Activated B cell treated with CpG ODN at 0.5 μM for 24 hours (primary cell): ENCODE measurements at regions of chr20 and their contacts with region 1.

Region 1: DNA sequence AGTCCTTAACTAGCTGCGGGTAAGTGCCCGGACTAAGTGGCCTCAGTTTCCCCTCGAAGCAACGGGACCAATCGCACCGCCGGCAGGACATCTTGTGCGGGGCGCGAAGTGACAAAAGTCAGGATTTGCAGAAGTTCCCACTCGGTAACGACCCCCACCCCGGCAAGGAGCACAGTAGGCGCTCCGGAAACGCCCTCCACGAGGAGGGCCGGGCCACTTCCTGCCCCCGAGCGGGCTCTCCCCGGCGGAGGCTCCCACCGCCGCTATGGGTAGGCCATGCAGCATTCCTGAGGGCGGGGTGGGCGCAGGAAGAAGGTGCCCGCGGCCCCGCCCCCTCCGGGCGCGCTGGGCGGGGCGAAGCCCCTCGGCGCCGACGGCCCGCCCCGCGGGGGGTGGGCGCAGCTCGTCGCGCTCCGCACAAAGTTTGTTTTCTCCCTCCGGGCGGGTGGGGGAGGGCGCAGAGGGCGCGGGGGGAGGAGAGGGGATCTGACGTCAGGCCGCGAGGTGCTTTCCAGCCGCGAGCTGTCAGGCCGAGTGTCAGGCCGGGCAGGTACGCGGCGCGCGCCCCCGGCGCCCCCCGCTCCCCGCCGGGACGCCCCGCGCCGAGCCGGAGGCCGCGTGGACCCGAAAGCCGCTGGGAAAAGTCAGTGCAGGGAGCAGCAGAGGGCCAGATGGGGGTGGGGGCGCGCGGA is at the start of gene TGIF2:
- DNase-seq: peak; percentile 92
- ATAC-seq: peak; percentile 77
- H3K4me3 Mint-ChIP-seq: peak within 1 kb of the TSS; percentile 90
- H3K27ac Mint-ChIP-seq: peak within 1 kb of the TSS; percentile 91
- H3K4me1 Mint-ChIP-seq: peaks cover 36% of the 10 kb centered on the region
- H3K27me3 Mint-ChIP-seq: no peaks in the 10 kb centered on the region
- CTCF ChIP-seq: no peak
- total RNA-seq, gene TGIF2: 40.8 and 43.8 TPM in 2 replicates

Region 2: GRCh38 chr20:36314734-36315541 is 258.3 kb before region 1 on chr20:
- CTCF ChIA-PET with region 1: no interaction called
- POLR2A ChIA-PET with region 1: no interaction called
- intact Hi-C with region 1: no loop called
- DNase-seq: no peak
- ATAC-seq: no peak
- H3K4me3 Mint-ChIP-seq: no peak overlapping the region
- H3K27ac Mint-ChIP-seq: no peak overlapping the region
- H3K4me1 Mint-ChIP-seq: no peaks in the 10 kb centered on the region
- H3K27me3 Mint-ChIP-seq: peaks cover 22% of the 10 kb centered on the region
- CTCF ChIP-seq: no peak

Region 3: GRCh38 chr20:36355469-36356171 is 217.6 kb before region 1 on chr20:
- CTCF ChIA-PET with region 1: no interaction called
- POLR2A ChIA-PET with region 1: no interaction called
- intact Hi-C with region 1: no loop called
- DNase-seq: no peak
- ATAC-seq: no peak
- H3K4me3 Mint-ChIP-seq: no peak overlapping the region
- H3K27ac Mint-ChIP-seq: no peak overlapping the region
- H3K4me1 Mint-ChIP-seq: no peaks in the 10 kb centered on the region
- H3K27me3 Mint-ChIP-seq: peaks cover 18% of the 10 kb centered on the region
- CTCF ChIP-seq: no peak

Region 4: GRCh38 chr20:36591854-36592641 is 18.8 kb after region 1 on chr20:
- CTCF ChIA-PET with region 1: interaction called, 11 read pairs
- POLR2A ChIA-PET with region 1: interaction called, 205 read pairs
- intact Hi-C with region 1: loop called (anchors 1 kb)
- DNase-seq: no peak
- ATAC-seq: no peak
- H3K4me3 Mint-ChIP-seq: no peak overlapping the region
- H3K27ac Mint-ChIP-seq: peak overlapping the region; percentile 53
- H3K4me1 Mint-ChIP-seq: peaks cover 70% of the 10 kb centered on the region
- H3K27me3 Mint-ChIP-seq: no peaks in the 10 kb centered on the region
- CTCF ChIP-seq: no peak

Region 5: DNA sequence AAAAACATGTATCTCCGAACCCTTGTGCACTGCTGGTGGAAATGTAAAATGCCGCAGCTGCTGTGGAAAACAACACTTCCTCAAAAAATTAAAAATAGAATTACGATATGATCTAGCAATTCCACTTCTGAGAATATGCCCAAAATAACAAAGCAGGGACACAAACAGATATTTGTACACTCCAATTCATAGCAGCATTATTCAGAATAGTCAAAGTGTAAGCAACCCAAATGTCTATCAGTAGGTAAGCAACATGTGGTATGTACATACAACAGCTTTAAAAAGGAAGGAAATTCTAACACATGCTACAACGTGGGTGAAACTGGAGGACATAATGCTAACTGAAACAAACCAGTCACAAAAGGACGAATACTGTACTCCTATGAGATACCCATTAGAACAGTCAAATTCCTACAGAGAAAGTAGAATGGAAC is 26.7 kb after region 1 on chr20:
- CTCF ChIA-PET with region 1: interaction called, 39 read pairs
- POLR2A ChIA-PET with region 1: interaction called, 268 read pairs
- intact Hi-C with region 1: loop called (anchors 1 kb)
- DNase-seq: no peak
- ATAC-seq: no peak
- H3K4me3 Mint-ChIP-seq: peak overlapping the region; percentile 50
- H3K27ac Mint-ChIP-seq: peak overlapping the region; percentile 84
- H3K4me1 Mint-ChIP-seq: peaks cover 64% of the 10 kb centered on the region
- H3K27me3 Mint-ChIP-seq: no peaks in the 10 kb centered on the region
- CTCF ChIP-seq: no peak

Region 6: DNA sequence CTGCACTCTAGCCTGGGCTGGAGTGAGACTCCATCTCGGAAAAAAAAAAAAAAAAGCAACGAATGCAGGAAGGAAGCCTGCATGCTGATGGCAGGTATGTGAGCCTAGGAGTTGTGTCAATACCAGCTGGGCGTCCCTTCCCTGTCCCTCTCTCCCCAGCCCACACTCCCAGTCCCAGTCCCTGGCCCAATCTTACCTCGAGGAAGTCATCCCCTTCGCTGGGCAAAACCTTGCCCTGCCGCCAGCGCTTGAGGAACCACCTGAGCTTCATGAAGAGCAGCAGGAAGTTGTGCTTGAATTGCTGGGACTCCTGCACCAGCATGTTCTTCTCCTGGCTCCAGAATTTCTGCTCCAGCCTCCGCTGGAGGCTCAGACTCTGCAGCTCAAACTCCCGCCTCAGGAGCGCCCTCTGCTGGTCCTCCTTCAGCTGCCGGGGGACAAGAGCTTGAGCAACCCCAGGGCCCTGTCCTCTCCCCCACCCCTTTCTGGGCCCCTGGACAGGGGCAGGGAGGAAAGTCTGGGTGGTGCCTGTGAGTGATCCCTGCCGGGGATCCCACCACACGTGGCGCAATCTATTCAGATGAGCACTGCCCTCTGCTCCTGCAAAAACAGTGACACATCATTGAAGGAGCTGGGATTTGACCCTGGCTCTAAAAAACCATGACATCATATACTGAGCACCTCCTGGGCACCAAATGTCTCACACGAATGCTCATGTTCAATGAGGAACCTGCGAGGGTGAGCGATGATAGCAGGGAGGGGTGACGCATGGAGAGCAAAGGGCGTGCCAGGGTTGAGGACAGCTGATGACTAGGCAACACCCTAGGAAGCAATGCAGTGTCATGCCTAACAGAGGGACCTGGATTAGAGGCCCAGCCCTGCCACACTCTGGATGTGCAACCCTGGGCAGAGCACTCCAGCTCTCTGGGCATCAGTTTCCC is 235.3 kb after region 1 on chr20:
- CTCF ChIA-PET with region 1: no interaction called
- POLR2A ChIA-PET with region 1: no interaction called
- intact Hi-C with region 1: no loop called
- DNase-seq: peak; percentile 62
- ATAC-seq: peak; percentile 71
- H3K4me3 Mint-ChIP-seq: no peak overlapping the region
- H3K27ac Mint-ChIP-seq: peak overlapping the region; percentile 35
- H3K4me1 Mint-ChIP-seq: peaks cover 3% of the 10 kb centered on the region
- H3K27me3 Mint-ChIP-seq: no peaks in the 10 kb centered on the region
- CTCF ChIP-seq: peak; percentile 71